Activated CD8-positive, alpha-beta T cell treated with anti-CD3 and anti-CD28 coated beads, Interleukin-2, amount 10 ng/mL, durations not matched to agents 7 days and 5 days (primary cell): ENCODE measurements at regions of chr6 and their contacts with region 1.

Region 1: GRCh38 chr6:137415127-137415833 is 78.9 kb downstream of the OLIG3 start:
- DNase-seq: peak; percentile 79
- ATAC-seq: peak; percentile 98
- H3K4me3 Mint-ChIP-seq: peak overlapping the region; percentile 73
- H3K27ac Mint-ChIP-seq: peak overlapping the region; percentile 22
- H3K4me1 Mint-ChIP-seq: peaks cover 9% of the 10 kb centered on the region
- H3K27me3 Mint-ChIP-seq: peaks cover 7% of the 10 kb centered on the region

Region 2: GRCh38 chr6:137341681-137342195 is 73.5 kb before region 1 on chr6:
- CTCF ChIA-PET with region 1: interaction called, 28 read pairs
- POLR2A ChIA-PET with region 1: interaction called, 4 read pairs
- DNase-seq: peak; percentile 58
- ATAC-seq: no peak
- H3K4me3 Mint-ChIP-seq: peak overlapping the region; percentile 66
- H3K27ac Mint-ChIP-seq: no peak overlapping the region
- H3K4me1 Mint-ChIP-seq: peaks cover 15% of the 10 kb centered on the region
- H3K27me3 Mint-ChIP-seq: peaks cover 26% of the 10 kb centered on the region